CD8-positive, alpha-beta T cell (primary cell): ENCODE measurements at regions of chr15 and their contacts with region 1.

Region 1: GRCh38 chr15:56798639-56799038 is 65.3 kb upstream of the ZNF280D start:
- DNase-seq: no peak
- ATAC-seq: no peak
- H3K4me3 ChIP-seq: no peak overlapping the region
- H3K4me3 Mint-ChIP-seq: no peak overlapping the region
- H3K27ac ChIP-seq: no peak overlapping the region
- H3K27ac Mint-ChIP-seq: no peak overlapping the region
- H3K4me1 ChIP-seq: no peaks in the 10 kb centered on the region
- H3K4me1 Mint-ChIP-seq: no peaks in the 10 kb centered on the region
- H3K27me3 ChIP-seq: peaks cover 0 to 3% of the 10 kb centered on the region in 2 experiments
- H3K27me3 Mint-ChIP-seq: no peaks in the 10 kb centered on the region
- CTCF ChIP-seq: no peak

Region 2: DNA sequence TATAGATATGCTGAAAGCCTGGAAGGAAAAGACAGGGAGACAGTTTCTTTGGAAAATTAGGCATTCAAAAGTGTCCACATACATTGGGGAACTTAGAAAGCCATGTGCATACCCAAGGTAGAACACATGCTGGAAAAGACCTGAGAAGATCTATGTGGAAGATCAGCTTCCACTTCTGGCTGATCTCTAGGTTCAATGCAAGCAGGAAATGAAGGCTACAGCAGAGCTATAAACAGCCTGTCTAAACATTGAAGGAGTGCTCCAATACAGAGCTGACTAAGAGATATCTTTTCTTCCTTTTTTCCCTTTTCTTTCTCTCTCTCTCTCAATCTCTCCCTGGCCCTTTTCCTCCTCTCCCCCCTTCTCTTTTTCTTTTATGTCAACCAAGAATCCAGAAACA is 46.3 kb after region 1 on chr15:
- CTCF ChIA-PET with region 1: no interaction called
- POLR2A ChIA-PET with region 1: no interaction called
- intact Hi-C with region 1: loop called in 1 of 2 experiments (anchors 5 kb)
- DNase-seq: no peak
- ATAC-seq: no peak
- H3K4me3 ChIP-seq: no peak overlapping the region
- H3K4me3 Mint-ChIP-seq: no peak overlapping the region
- H3K27ac ChIP-seq: no peak overlapping the region
- H3K27ac Mint-ChIP-seq: no peak overlapping the region
- H3K4me1 ChIP-seq: no peaks in the 10 kb centered on the region
- H3K4me1 Mint-ChIP-seq: no peaks in the 10 kb centered on the region
- H3K27me3 ChIP-seq: no peaks in the 10 kb centered on the region
- H3K27me3 Mint-ChIP-seq: no peaks in the 10 kb centered on the region
- CTCF ChIP-seq: no peak

Region 3: DNA sequence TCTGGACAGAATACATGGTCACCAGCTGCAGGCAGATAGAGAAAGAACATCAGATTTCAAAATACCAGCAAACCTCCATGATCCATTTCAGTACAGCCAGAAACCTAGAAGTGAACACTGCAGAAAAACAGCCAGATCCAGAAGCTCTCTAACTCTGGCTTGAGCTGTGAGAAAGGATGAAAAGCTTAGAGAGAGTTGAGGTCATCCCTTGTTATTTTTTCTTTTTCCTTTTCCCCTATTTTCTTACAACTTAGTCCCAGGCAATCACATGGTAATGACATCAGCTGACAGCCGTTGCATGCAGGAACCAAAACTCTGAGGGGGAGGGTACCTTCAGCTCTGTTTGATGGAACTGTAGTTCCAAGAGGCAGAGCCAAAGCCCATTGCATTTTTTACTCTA is 233.0 kb after region 1 on chr15:
- CTCF ChIA-PET with region 1: no interaction called
- POLR2A ChIA-PET with region 1: no interaction called
- intact Hi-C with region 1: no loop called
- DNase-seq: no peak
- ATAC-seq: no peak
- H3K4me3 ChIP-seq: no peak overlapping the region
- H3K4me3 Mint-ChIP-seq: no peak overlapping the region
- H3K27ac ChIP-seq: no peak overlapping the region
- H3K27ac Mint-ChIP-seq: no peak overlapping the region
- H3K4me1 ChIP-seq: peaks cover 18% of the 10 kb centered on the region
- H3K4me1 Mint-ChIP-seq: peaks cover 49% of the 10 kb centered on the region
- H3K27me3 ChIP-seq: no peaks in the 10 kb centered on the region
- H3K27me3 Mint-ChIP-seq: no peaks in the 10 kb centered on the region
- CTCF ChIP-seq: no peak